Activated CD8-positive, alpha-beta T cell treated with anti-CD3 and anti-CD28 coated beads for 36 hours (primary cell): ENCODE measurements at regions of chr14 and their contacts with region 1.

Region 1: DNA sequence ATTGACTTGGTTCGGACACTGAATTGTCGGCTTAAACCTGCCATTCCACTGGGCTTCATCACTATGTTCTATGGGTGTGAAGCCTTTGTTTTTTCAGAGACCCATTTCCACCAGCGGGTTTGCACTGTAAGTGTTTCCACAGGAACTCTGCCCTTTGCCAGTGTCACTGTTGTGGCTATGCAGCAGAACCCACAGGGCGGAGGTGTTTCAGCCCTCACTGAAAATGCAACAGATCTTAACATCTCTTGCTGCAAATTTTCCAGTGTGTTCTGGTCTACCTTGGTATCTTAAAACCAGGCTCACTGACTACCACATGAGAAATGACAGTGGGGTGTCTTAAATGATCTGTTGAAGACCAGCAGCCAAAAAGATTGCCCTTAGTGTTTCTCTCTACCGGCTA is 21.1 kb downstream of the PRKCH start:
- DNase-seq: peak; percentile 94
- ATAC-seq: peak; percentile 60
- H3K4me3 Mint-ChIP-seq: peak overlapping the region; percentile 80
- H3K27ac Mint-ChIP-seq: peak overlapping the region; percentile 98
- H3K4me1 Mint-ChIP-seq: peaks cover 95% of the 10 kb centered on the region
- H3K27me3 Mint-ChIP-seq: no peaks in the 10 kb centered on the region
- CTCF ChIP-seq: no peak

Region 2: GRCh38 chr14:61326847-61327246 is 15.6 kb before region 1 on chr14:
- CTCF ChIA-PET with region 1: interaction called, 32 read pairs
- POLR2A ChIA-PET with region 1: interaction called, 116 read pairs
- intact Hi-C with region 1: loop called (anchors 2 kb)
- DNase-seq: no peak
- ATAC-seq: no peak
- H3K4me3 Mint-ChIP-seq: peak overlapping the region; percentile 99
- H3K27ac Mint-ChIP-seq: peak overlapping the region; percentile 93
- H3K4me1 Mint-ChIP-seq: peaks cover 57% of the 10 kb centered on the region
- H3K27me3 Mint-ChIP-seq: no peaks in the 10 kb centered on the region
- CTCF ChIP-seq: no peak

Region 3: GRCh38 chr14:61381547-61381946 is 39.1 kb after region 1 on chr14:
- CTCF ChIA-PET with region 1: interaction called, 17 read pairs
- POLR2A ChIA-PET with region 1: interaction called, 9 read pairs
- intact Hi-C with region 1: no loop called
- DNase-seq: peak; percentile 37
- ATAC-seq: no peak
- H3K4me3 Mint-ChIP-seq: peak overlapping the region; percentile 54
- H3K27ac Mint-ChIP-seq: peak overlapping the region; percentile 83
- H3K4me1 Mint-ChIP-seq: peaks cover 64% of the 10 kb centered on the region
- H3K27me3 Mint-ChIP-seq: no peaks in the 10 kb centered on the region
- CTCF ChIP-seq: no peak

Region 4: DNA sequence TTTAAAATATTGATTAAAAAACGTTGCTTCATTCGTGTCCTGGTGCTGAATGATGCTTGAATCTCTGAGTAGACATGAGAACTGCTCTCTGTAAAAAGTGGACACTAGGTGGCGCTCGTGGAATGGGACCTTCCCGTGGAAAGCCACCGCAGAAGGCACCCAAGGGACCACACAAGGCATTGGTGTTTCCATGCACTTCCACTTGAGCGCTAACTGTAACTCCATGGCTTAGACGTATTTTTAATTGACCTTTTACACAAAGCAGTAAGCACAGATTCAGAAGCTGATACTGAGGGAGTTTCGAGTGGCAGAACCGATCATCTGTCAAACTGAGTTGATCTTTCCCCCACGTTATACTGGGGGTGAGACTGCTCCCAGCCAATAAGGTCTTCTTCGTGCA is 114.2 kb after region 1 on chr14:
- CTCF ChIA-PET with region 1: interaction called, 4 read pairs
- POLR2A ChIA-PET with region 1: interaction called, 3 read pairs
- intact Hi-C with region 1: loop called (anchors 2 kb)
- DNase-seq: peak; percentile 92
- ATAC-seq: no peak
- H3K4me3 Mint-ChIP-seq: no peak overlapping the region
- H3K27ac Mint-ChIP-seq: peak overlapping the region; percentile 84
- H3K4me1 Mint-ChIP-seq: peaks cover 82% of the 10 kb centered on the region
- H3K27me3 Mint-ChIP-seq: no peaks in the 10 kb centered on the region
- CTCF ChIP-seq: peak; percentile 92